Transverse colon (tissue), 4 donors: ENCODE measurements at regions of chr12 and their contacts with region 1.

Region 1: DNA sequence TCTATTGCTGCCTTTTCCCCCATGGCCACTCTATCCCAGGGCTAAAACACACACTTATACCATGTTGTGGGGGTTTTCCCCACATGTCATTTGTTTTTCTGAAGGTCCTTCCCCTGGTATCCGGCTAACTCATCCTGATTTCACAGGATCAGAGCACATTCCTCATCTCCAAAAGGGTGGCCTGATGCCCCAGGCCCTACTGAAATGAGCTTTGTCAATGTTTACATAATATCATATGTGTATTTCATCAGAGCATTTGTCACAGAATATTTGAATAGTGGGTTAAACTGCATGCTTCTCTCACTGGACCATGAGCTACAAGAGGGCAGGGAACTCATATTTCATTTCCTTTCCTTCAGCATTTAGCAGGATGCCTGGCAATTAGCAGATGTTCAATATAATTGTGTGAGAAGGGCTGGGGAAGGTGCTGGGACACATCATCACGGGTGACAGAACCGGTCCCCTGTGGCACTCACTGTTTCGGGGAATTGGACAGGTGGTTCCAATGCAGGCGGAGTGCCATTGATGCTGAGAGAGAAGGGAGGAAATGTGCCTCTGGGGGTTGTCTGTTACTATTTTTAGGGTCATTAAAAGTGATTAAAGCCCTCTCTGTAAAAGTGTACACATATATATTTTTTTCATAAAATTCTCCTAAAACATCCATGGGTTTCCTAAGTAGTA is 26.8 kb downstream of the EMP1 start:
- DNase-seq: no peak
- H3K4me3 ChIP-seq: no peak overlapping the region
- H3K27ac ChIP-seq: no peak overlapping the region
- H3K4me1 ChIP-seq: peaks cover 0 to 14% (median 10%) of the 10 kb centered on the region in 4 donors
- H3K27me3 ChIP-seq: no peaks in the 10 kb centered on the region
- CTCF ChIP-seq: no peak
- EP300 ChIP-seq: no peak
- POLR2A ChIP-seq: no peak

Region 2: GRCh38 chr12:12916135-12916944 is 307.0 kb before region 1 on chr12:
- in situ Hi-C with region 1: loop called in 3 of 4 experiments (anchors 10 kb)
- intact Hi-C with region 1: no loop called
- DNase-seq: peak; percentile 87
- H3K4me3 ChIP-seq: no peak overlapping the region
- H3K27ac ChIP-seq: peak overlapping the region in 3 of 4 donors; percentile 5 to 15 (median 12)
- H3K4me1 ChIP-seq: peaks cover 0 to 6% (median 3%) of the 10 kb centered on the region in 4 donors
- H3K27me3 ChIP-seq: no peaks in the 10 kb centered on the region
- CTCF ChIP-seq: peak; percentile 95 to 98 (median 97)
- EP300 ChIP-seq: no peak
- POLR2A ChIP-seq: no peak

Region 3: DNA sequence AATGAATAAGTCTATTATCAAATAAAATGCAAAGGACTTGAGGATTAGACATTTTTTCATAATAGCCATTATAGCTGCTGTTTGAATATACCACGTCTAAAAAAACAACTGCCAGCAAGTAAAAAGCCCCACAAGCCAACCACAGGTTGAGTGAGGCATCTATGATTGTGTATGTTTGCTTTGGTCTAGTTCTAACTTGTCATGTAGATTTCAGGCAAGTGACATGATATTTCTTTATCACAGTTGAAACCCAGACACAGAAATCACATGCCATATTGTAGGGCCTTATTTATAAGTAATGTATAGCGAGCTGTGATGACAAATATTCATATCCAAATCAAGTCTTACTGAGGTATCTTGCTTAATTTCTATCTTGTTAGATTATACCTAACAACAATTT is 199.0 kb after region 1 on chr12:
- in situ Hi-C with region 1: no loop called
- intact Hi-C with region 1: no loop called
- DNase-seq: no peak
- H3K4me3 ChIP-seq: no peak overlapping the region
- H3K27ac ChIP-seq: no peak overlapping the region
- H3K4me1 ChIP-seq: no peaks in the 10 kb centered on the region
- H3K27me3 ChIP-seq: no peaks in the 10 kb centered on the region
- CTCF ChIP-seq: no peak
- EP300 ChIP-seq: no peak
- POLR2A ChIP-seq: no peak

Region 4: DNA sequence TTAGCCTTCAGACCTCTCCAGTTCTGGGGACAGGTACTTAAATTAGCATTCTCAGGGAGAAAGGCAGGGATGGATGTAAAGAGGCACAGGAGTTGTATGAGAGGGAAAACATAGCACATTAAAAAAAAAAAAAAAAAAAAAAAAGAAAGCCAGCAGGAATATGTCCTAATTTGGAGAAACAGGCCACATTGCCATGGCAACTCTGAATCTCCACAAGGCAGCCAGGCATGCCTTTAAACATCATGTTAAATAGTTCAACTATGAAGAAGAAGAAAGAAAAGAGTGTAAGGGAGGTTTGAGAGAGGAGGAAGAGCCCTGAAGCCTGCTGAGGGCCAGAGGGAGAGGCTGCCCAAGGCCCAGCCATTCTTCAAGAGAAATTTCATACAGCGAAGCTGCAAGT is 612.3 kb after region 1 on chr12:
- in situ Hi-C with region 1: no loop called
- intact Hi-C with region 1: no loop called
- DNase-seq: no peak
- H3K4me3 ChIP-seq: no peak overlapping the region
- H3K27ac ChIP-seq: no peak overlapping the region
- H3K4me1 ChIP-seq: no peaks in the 10 kb centered on the region
- H3K27me3 ChIP-seq: no peaks in the 10 kb centered on the region
- CTCF ChIP-seq: no peak
- EP300 ChIP-seq: no peak
- POLR2A ChIP-seq: no peak